Activated T-helper 2 cell treated with anti-CD3 and anti-CD28 coated beads, Interferon-gamma antibody, Interleukin-2, Interleukin-4, amounts not matched to agents 10 μg/mL and 5 μg/mL and 100 μg/mL, durations not matched to agents 14 hours and 24 hours and 36 hours (primary cell): ENCODE measurements at regions of chr12 and their contacts with region 1.

Region 1: DNA sequence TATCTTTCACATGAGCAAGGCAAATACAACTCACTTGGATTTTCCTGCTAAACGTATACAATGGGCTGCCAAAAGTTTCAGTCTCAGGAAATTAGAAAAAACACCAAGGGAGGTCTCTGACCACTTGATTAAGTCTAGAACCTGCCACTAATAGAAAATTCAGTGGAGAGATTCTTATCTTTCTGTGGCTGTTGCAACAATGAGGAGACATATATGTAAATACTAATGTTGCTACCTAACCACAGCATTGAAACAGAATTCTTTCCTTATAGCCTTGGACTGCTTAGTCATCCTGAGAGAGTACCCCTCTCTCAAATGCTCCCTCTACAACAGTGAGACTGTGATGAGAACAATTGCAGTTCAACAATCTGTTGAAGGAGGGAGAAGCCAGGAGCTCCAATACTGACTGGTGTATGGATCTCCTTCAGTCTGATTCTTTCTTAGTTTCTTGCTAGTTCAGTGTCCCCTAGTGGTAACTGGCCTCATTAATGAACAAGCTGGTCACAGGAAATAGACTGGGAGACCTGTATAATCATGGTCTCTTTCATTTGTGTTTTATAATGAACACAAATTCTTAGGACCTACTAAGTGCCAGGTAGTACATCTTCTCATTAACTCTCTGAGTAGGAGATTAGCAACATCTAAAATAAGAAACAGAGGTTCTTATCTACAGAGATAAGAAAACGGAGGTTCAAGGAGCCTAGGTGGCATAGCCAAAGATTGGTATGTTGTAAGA is 164.5 kb downstream of the SLC38A4 start:
- DNase-seq: no peak
- H3K4me3 Mint-ChIP-seq: no peak overlapping the region
- H3K27ac Mint-ChIP-seq: peak overlapping the region; percentile 58
- H3K4me1 Mint-ChIP-seq: peaks cover 44% of the 10 kb centered on the region
- H3K27me3 Mint-ChIP-seq: no peaks in the 10 kb centered on the region

Region 2: DNA sequence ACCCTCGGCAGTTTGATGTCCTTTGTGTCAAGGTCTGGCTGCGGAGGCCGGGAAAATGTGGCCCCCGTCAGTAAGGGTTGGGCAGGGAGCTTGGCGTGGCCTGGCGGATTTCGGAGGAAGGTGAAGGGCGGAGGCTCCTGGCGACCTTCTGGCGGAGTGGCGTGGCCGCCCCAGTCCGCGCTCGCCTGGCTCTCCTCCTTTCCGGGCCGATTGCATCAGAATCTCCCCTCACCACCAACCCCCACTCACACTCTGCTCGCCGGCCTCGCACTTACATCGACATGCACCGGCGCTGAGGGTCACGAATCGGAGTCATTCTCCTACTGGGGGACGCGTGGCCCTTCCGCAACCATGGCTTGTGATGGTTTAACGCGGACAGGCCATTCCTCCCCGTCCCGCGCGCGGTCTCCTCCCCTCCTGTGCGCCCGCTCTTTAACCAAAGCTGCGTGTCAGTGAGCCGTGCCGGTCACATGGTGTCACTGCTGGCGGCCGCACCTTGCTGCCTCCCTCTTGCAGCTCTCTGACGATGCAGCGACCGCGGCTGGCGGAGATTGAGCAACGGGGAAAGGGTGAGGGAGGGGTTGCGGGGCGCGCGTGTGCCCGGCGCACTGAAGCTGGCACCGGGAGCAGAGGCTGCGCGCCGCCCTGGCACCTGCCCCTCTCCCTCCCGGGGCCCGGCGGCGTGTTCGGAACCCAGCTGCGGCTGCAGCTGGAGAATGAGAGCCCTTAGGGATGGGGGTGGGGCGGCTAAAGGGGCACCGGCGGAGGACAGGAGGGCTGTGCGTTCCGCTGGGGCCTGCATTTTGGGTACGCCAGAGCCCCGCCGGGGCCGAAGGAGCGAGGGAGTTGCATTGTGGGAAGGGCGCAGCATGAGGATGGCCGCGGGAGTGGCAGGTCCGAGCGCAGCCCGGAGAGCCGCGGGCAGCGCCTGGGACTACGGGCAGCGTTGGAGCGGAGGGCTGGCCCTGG is 392.4 kb before region 1 on chr12 and contains the start of gene SLC38A1:
- intact Hi-C with region 1: loop called (anchors 5 kb)
- DNase-seq: peak; percentile 86
- H3K4me3 Mint-ChIP-seq: no peak within 1 kb of the TSS
- H3K27ac Mint-ChIP-seq: no peak within 1 kb of the TSS
- H3K4me1 Mint-ChIP-seq: peaks cover 26% of the 10 kb centered on the region
- H3K27me3 Mint-ChIP-seq: no peaks in the 10 kb centered on the region
- total RNA-seq, gene SLC38A1: 152 and 154 TPM in 2 replicates

Region 3: GRCh38 chr12:46473634-46474329 is 187.5 kb before region 1 on chr12:
- intact Hi-C with region 1: loop called (anchors 5 kb)
- DNase-seq: no peak
- H3K4me3 Mint-ChIP-seq: peak overlapping the region; percentile 33
- H3K27ac Mint-ChIP-seq: peak overlapping the region; percentile 80
- H3K4me1 Mint-ChIP-seq: peaks cover 44% of the 10 kb centered on the region
- H3K27me3 Mint-ChIP-seq: no peaks in the 10 kb centered on the region

Region 4: DNA sequence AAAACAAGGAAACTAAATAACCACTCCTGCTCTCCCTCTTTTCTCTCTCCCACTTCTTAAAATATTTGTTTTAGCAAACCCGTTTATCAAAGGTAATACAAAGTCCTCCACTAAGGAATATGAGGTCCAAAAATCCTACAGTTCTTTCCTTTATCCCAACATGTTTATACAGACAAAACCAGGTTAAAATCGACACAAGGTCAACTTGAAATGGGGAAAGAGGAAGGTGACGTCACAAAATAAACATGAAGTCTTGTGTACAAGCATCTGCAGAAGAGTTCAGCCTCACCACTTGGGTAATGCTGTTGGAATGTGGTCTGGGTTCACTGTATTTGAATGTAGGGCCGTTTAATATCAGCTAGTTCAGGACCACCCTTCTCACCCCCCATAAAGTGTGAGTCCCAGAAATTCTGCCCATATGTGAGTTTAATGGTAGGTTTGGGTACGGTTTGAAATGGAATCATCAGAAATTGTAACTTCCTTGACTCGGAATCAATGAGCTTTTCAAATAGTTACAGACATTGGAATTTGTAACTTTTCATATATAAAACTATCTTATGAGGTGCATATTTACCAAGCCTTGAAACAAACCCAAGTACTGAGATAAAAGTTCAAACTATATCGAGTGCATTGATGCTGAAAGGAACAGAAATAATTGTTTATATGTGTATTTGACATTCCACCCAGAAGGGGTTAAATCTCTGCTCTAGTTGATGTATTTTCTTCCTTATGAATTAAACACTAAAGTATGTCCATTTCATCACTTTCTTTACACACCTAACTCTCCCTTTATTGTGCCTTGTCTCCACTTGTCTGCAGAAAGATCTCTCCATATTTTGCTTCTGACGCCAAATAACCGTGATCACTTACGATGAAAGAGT is 168.6 kb before region 1 on chr12:
- intact Hi-C with region 1: no loop called
- DNase-seq: no peak
- H3K4me3 Mint-ChIP-seq: no peak overlapping the region
- H3K27ac Mint-ChIP-seq: no peak overlapping the region
- H3K4me1 Mint-ChIP-seq: no peaks in the 10 kb centered on the region
- H3K27me3 Mint-ChIP-seq: no peaks in the 10 kb centered on the region

Region 5: DNA sequence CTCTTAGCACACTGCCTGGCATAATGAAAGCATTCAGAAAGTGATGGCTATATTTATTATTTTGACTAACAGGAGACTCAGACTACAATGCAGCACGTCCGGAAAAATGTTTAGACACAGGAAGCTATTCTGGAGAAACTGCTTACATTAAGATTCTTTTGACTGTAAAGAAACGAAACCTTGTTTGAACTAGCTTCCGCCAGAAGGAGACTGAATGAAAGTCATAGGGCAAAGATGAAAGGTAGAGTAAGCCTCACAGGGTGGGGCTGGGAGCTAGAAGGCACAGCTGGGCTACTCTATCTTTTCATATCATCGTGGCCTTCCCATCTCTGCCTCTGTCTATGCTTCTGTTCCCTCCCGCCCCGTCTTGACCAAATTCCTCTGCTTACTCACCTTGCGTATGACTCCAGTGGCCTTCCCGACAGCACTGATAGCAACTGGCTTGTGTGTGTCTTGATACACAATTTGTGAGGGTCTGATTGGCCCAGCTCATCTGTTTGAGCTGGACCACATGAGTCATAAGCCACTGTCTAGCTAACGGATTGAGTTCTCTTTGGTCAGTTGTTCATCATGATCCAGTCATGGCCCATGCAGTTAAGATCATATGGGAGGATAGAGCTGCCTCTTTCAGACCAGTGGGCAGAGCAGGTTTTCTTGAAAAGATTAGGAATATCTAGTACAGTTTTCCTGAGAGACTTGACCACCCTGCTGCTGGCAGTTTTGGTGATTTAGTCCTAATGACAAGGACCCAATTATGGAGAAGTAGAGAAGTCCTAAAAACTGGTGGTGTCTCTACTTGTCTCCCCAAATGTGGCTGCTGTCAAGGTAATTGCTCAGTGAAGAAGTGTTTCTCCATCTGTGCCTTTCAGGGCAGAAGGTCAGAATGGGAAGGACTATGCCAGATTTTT is 137.2 kb before region 1 on chr12:
- intact Hi-C with region 1: loop called (anchors 1 kb)
- DNase-seq: peak; percentile 55
- H3K4me3 Mint-ChIP-seq: peak overlapping the region; percentile 79
- H3K27ac Mint-ChIP-seq: peak overlapping the region; percentile 97
- H3K4me1 Mint-ChIP-seq: peaks cover 53% of the 10 kb centered on the region
- H3K27me3 Mint-ChIP-seq: no peaks in the 10 kb centered on the region

Region 6: DNA sequence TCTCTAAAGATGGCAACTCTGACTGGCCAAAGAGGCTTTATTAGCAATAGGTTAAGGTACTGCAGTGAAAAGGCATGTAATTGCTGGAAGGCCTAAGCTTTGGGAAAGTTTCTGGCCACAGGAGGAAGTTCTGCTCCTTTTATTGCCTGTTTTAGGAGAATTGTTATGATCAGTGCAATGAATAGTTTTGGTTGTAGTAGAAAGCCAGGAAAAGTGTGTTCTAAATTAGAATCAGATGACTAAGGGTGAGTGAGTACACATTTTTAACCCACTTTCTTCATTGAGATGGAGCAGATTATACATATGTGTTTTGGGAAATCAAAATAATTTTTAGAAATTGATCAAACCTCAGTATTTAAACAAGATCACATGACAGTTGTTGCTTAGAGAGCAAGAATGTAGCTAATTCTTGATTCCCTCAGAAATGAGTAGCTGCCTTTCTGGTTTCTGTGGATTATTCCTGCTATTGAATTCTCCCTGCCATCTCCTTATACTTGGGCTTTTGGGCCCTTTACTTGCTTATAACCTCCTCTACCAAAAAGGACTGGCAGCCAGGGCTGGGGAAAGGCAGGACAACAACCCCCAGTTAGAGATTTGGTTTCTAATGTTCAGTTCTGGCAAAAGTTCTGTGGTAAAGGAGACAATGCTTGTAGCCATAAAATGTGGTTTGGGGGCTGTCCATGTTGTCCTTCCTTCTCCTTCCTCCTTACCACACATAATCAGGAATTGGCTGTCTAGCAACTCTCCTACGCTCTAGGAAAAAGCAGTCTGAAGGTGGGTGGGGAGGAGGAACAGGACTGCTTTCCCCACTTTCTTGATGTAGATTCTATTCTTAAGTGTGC is 52.6 kb before region 1 on chr12:
- intact Hi-C with region 1: loop called (anchors 2 kb)
- DNase-seq: no peak
- H3K4me3 Mint-ChIP-seq: peak overlapping the region; percentile 37
- H3K27ac Mint-ChIP-seq: peak overlapping the region; percentile 65
- H3K4me1 Mint-ChIP-seq: peaks cover 37% of the 10 kb centered on the region
- H3K27me3 Mint-ChIP-seq: no peaks in the 10 kb centered on the region